ENCODE measurements at regions of chr1 and their contacts with region 1.

Region 1: DNA sequence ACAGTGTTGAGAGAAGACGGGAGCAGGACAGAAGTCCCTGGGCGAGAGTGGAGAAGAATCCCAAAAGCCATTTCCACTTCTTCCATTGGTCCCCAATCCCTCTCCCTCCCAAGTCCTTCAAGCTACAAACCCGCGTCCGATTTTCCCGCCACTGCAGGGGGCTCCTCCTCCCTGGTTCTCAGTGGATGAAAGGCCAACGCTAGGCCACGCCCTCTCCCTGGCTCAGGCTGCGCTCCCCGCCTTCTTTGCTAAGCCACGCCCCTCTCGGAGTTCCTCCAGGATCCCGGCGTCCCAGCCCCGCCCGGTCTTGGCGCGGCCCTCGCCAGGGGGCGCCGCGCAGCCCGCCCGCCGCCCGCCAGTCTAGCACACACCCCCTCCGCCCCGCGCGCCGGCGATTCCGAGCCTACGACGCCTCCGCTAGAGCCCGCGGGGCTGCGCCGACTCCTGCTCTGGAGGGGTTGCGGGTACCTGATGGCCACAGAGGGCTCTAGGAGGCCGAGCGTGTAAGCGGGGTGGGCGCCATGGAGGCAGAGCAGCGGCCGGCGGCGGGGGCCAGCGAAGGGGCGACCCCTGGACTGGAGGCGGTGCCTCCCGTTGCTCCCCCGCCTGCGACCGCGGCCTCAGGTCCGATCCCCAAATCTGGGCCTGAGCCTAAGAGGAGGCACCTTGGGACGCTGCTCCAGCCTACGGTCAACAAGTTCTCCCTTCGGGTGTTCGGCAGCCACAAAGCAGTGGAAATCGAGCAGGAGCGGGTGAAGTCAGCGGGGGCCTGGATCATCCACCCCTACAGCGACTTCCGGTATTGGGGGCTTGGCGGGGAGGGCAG is at the start of gene HCN3:
- DNase-seq: peak; percentile 99
- ATAC-seq: peak; percentile 71
- H3K4me3 ChIP-seq: peak within 1 kb of the TSS; percentile 96
- H3K27ac ChIP-seq: no peak within 1 kb of the TSS
- H3K4me1 ChIP-seq: peaks cover 13% of the 10 kb centered on the region
- H3K27me3 ChIP-seq: no peaks in the 10 kb centered on the region
- CTCF ChIP-seq: peak; percentile 85
- total RNA-seq, gene HCN3: 1.8 and 1.9 TPM in 2 replicates

Region 2: DNA sequence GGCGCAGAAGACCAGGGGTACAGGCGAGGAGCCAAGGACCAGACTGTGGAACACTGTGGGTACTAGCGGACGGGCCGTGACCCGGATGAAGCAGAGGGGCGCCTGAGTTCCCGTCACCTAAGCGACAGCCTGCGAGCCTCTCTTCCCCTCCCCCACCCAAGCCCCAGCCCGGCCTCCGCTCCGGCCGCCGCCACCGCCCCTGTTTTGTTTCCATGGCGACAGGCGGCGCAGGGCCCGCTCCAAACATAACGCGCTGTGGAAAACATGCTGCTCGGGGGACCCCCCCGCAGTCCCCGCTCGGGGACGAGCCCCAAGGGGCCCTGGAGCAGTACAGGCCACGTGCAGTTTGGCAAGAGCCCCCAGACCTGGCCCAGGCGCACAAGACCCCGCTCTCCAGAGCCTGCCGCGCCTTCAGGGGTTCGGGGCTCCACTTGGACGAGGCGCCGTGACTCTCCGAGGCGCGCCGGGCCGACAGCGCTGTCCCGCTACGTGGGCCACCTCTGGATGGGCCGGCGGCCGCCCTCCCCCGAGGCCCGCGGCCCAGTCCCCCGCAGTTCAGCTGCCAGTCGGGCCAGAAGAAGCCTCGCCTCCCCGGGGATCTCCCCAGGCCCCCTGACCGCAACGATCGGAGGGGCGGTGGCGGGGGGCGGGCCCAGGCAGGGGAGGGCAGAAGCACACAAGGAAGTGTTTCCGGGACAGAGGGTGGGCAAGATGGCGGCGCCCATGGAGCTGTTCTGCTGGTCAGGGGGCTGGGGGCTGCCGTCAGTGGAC is 68.6 kb before region 1 on chr1 and contains the start of gene MTX1:
- CTCF ChIA-PET with region 1: interaction called, 12 read pairs
- POLR2A ChIA-PET with region 1: no interaction called
- intact Hi-C with region 1: no loop called
- DNase-seq: peak; percentile 83
- ATAC-seq: peak; percentile 78
- H3K4me3 ChIP-seq: peak within 1 kb of the TSS; percentile 98
- H3K27ac ChIP-seq: peak within 1 kb of the TSS; percentile 90
- H3K4me1 ChIP-seq: peaks cover 26% of the 10 kb centered on the region
- H3K27me3 ChIP-seq: no peaks in the 10 kb centered on the region
- CTCF ChIP-seq: no peak
- total RNA-seq, gene MTX1: 141 and 152 TPM in 2 replicates

Region 3: DNA sequence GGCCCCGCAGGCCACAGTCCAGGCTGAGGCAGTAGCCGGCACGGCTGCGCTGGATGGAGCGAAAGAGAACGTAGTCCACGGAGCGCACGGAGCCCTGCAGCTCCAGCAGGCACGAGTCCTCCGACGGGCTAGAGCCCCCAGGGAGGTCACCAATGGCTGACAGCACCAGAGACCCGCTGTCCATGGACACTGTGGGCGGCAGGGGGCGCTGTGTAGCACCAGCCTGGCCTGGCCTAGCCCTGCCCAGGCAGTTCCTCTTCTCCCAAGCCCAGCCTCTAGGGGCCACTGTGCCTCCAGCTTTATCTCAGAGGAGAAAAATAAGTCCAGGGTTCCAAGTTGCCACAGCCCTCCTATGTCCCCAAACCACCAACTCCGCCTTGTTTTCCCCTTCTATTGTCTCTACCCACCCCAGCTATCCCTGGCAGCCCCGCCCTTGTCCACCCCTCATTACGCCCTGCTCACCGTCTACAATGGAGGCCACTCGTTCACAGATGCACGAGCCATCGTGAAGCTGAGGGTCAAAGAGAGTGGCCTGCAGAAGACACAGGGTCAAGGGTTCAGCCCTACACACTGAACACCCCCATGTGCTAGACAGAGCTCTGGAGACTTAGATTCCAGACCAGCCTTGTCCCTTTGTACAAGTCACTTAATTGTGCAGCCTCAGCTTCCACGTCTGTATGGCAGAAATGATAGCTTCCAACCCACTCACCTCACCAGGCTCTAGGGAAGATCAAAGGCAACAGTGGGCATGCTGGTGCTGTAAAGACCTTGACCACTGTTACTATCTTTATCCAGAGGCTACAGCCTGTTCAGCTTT is 26.4 kb before region 1 on chr1:
- CTCF ChIA-PET with region 1: interaction called, 6 read pairs
- POLR2A ChIA-PET with region 1: no interaction called
- intact Hi-C with region 1: loop called (anchors 1 kb)
- DNase-seq: peak; percentile 97
- ATAC-seq: peak; percentile 66
- H3K4me3 ChIP-seq: no peak overlapping the region
- H3K27ac ChIP-seq: no peak overlapping the region
- H3K4me1 ChIP-seq: peaks cover 19% of the 10 kb centered on the region
- H3K27me3 ChIP-seq: no peaks in the 10 kb centered on the region
- CTCF ChIP-seq: peak; percentile 99

Region 4: GRCh38 chr1:155261852-155262673 is 15.2 kb before region 1 on chr1 and contains the start of gene SCAMP3:
- CTCF ChIA-PET with region 1: interaction called, 6 read pairs
- POLR2A ChIA-PET with region 1: interaction called, 21 read pairs
- intact Hi-C with region 1: no loop called
- DNase-seq: peak; percentile 99
- ATAC-seq: peak; percentile 94
- H3K4me3 ChIP-seq: peak within 1 kb of the TSS; percentile 88
- H3K27ac ChIP-seq: peak within 1 kb of the TSS; percentile 69
- H3K4me1 ChIP-seq: peaks cover 16% of the 10 kb centered on the region
- H3K27me3 ChIP-seq: no peaks in the 10 kb centered on the region
- CTCF ChIP-seq: no peak; the same call in 1 of the 2 replicates
- total RNA-seq, gene SCAMP3: 218 and 219 TPM in 2 replicates

Region 5: GRCh38 chr1:155308493-155309422 is 31.5 kb after region 1 on chr1 and contains the start of gene FDPS:
- CTCF ChIA-PET with region 1: interaction called, 3 read pairs
- POLR2A ChIA-PET with region 1: no interaction called
- intact Hi-C with region 1: loop called (anchors 1 kb)
- DNase-seq: peak; percentile 100
- ATAC-seq: peak; percentile 97
- H3K4me3 ChIP-seq: peak within 1 kb of the TSS; percentile 92
- H3K27ac ChIP-seq: peak within 1 kb of the TSS; percentile 85
- H3K4me1 ChIP-seq: peaks cover 17% of the 10 kb centered on the region; the same call in 1 of the 2 replicates
- H3K27me3 ChIP-seq: no peaks in the 10 kb centered on the region
- CTCF ChIP-seq: no peak
- total RNA-seq, gene FDPS: 301 and 313 TPM in 2 replicates

Region 6: DNA sequence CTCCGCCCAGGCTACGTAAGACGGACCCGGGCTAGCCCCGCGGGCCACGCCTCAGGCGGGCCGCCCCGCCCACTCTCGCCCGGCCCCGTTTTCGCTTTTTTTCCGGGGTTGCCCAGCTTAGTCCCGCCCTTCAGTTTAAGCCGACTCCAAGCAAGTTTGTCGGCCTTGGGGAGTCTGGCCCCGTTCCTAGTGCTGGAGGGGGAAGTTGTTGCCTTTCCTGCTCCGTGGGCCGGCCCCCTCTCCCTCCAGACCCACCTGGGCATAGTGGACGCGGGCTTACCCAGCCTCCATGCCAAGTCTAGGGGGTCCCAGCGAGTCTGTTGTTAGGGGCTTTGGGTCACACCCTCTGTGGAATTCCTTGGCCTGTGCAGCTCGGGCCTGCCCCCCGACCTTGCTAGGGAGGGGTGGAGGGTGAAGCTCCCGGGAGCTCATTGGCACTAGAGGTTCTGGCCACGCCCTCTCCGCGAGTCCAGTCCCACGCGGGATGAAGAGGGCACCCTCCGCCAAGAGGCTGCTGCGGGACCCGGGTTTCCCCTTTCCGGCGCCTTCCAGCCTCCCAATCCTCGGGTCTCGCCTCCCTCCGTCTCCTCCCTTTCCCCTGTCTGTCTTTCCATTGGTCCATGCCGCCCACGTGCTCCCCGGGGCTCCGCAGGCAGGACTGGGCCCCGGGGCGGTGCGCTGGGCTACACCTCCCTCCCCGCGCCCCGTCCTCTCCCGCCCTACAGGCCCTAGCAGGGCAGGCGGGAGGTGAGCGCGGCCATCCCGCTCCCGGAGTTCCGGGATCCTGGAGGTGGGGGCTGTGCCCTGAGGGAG is 46.7 kb after region 1 on chr1:
- CTCF ChIA-PET with region 1: interaction called, 5 read pairs
- POLR2A ChIA-PET with region 1: interaction called, 6 read pairs
- intact Hi-C with region 1: loop called (anchors 1 kb)
- DNase-seq: peak; percentile 98
- ATAC-seq: peak; percentile 63
- H3K4me3 ChIP-seq: peak overlapping the region; percentile 80
- H3K27ac ChIP-seq: peak overlapping the region; percentile 83
- H3K4me1 ChIP-seq: peaks cover 21% of the 10 kb centered on the region
- H3K27me3 ChIP-seq: no peaks in the 10 kb centered on the region
- CTCF ChIP-seq: no peak

Region 7: DNA sequence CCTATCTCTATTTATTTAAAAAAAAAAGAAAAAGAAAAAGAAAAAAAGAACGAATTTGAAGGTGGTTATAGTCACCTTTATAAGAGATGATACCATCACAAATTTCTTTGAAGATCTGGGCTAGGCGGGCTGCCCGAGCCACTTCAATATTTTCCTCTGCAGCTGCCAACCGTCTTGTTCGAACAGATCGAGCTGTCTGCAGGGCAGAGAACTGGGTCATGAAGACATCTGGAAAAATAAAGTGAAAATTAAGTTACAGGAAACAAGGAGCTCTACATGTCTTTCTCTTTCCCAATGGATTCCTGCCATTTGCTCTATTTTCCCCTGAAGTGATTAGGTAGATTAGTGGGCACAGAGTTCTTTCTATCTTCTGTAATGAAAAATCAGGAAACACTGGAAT is 75.3 kb after region 1 on chr1:
- CTCF ChIA-PET with region 1: no interaction called
- POLR2A ChIA-PET with region 1: no interaction called
- intact Hi-C with region 1: no loop called
- DNase-seq: no peak
- ATAC-seq: no peak
- H3K4me3 ChIP-seq: no peak overlapping the region
- H3K27ac ChIP-seq: no peak overlapping the region
- H3K4me1 ChIP-seq: no peaks in the 10 kb centered on the region
- H3K27me3 ChIP-seq: no peaks in the 10 kb centered on the region
- CTCF ChIP-seq: no peak

Region 8: GRCh38 chr1:155591770-155592169 is 314.5 kb after region 1 on chr1:
- CTCF ChIA-PET with region 1: no interaction called
- POLR2A ChIA-PET with region 1: no interaction called
- intact Hi-C with region 1: loop called (anchors 1 kb)
- DNase-seq: peak; percentile 82
- ATAC-seq: peak; percentile 79
- H3K4me3 ChIP-seq: no peak overlapping the region
- H3K27ac ChIP-seq: no peak overlapping the region
- H3K4me1 ChIP-seq: no peaks in the 10 kb centered on the region
- H3K27me3 ChIP-seq: no peaks in the 10 kb centered on the region
- CTCF ChIP-seq: peak; percentile 75

Measured in PC-3 (cell line).